ENCODE measurements at regions of chr5 and their contacts with region 1.

Region 1: GRCh38 chr5:141564216-141564692 is 54.5 kb downstream of the DIAPH1 start:
- DNase-seq: peak; percentile 78
- H3K4me3 Mint-ChIP-seq: no peak overlapping the region
- H3K27ac Mint-ChIP-seq: peak overlapping the region; percentile 72
- H3K4me1 Mint-ChIP-seq: peaks cover 33% of the 10 kb centered on the region
- H3K27me3 Mint-ChIP-seq: no peaks in the 10 kb centered on the region
- CTCF ChIP-seq: peak; percentile 92

Region 2: GRCh38 chr5:140710899-140711552 is 853.2 kb before region 1 on chr5:
- CTCF ChIA-PET with region 1: no interaction called
- intact Hi-C with region 1: loop called (anchors 10 kb)
- DNase-seq: peak; percentile 97
- H3K4me3 Mint-ChIP-seq: peak overlapping the region; percentile 99
- H3K27ac Mint-ChIP-seq: peak overlapping the region; percentile 100
- H3K4me1 Mint-ChIP-seq: peaks cover 32% of the 10 kb centered on the region
- H3K27me3 Mint-ChIP-seq: peaks cover 12% of the 10 kb centered on the region
- CTCF ChIP-seq: no peak

Region 3: GRCh38 chr5:141369994-141370848 is 194.0 kb before region 1 on chr5 and contains the start of gene PCDHGB3:
- CTCF ChIA-PET with region 1: interaction called, 10 read pairs
- intact Hi-C with region 1: loop called (anchors 1 kb)
- DNase-seq: peak; percentile 41
- H3K4me3 Mint-ChIP-seq: peak within 1 kb of the TSS; percentile 62
- H3K27ac Mint-ChIP-seq: peak within 1 kb of the TSS; percentile 75
- H3K4me1 Mint-ChIP-seq: no peaks in the 10 kb centered on the region
- H3K27me3 Mint-ChIP-seq: no peaks in the 10 kb centered on the region
- CTCF ChIP-seq: no peak
- total RNA-seq, gene PCDHGB3: 1.2 and 1.6 TPM in 2 replicates

Region 4: GRCh38 chr5:141412854-141413539 is 151.3 kb before region 1 on chr5 and contains the start of gene PCDHGA10:
- CTCF ChIA-PET with region 1: interaction called, 20 read pairs
- intact Hi-C with region 1: no loop called
- DNase-seq: no peak
- H3K4me3 Mint-ChIP-seq: no peak within 1 kb of the TSS
- H3K27ac Mint-ChIP-seq: no peak within 1 kb of the TSS
- H3K4me1 Mint-ChIP-seq: peaks cover 24% of the 10 kb centered on the region
- H3K27me3 Mint-ChIP-seq: no peaks in the 10 kb centered on the region
- CTCF ChIP-seq: no peak
- total RNA-seq, gene PCDHGA10: 2.6 and 3.7 TPM in 2 replicates

Region 5: GRCh38 chr5:141524604-141525597 is 39.4 kb before region 1 on chr5:
- CTCF ChIA-PET with region 1: interaction called, 15 read pairs
- intact Hi-C with region 1: loop called (anchors 1 kb)
- DNase-seq: peak; percentile 90
- H3K4me3 Mint-ChIP-seq: peak overlapping the region; percentile 5
- H3K27ac Mint-ChIP-seq: peak overlapping the region; percentile 7
- H3K4me1 Mint-ChIP-seq: peaks cover 61% of the 10 kb centered on the region
- H3K27me3 Mint-ChIP-seq: no peaks in the 10 kb centered on the region
- CTCF ChIP-seq: peak; percentile 100

Measured in Calu3 (cell line).